ENCODE measurements at regions of chr1 and their contacts with region 1.

Region 1: DNA sequence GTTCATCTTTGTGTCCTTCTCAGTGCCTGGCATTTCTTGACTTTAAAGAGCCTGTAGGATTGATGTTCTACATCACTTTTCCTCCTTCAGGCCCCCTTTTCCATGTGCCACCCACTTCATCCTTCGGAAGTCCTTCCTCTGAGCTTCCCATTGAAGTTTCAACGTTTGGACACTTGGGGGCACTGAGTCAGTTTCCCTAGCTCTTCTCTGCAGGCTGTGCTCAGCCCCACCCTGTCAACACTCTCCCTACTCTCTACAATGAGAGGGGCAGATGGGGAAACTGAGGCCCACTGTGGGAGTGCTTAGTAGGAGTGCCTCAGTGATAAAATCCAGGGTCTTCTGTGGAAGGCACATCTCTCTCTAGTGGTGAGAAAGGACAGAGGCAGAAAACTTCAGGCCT is 11.9 kb downstream of the KCNJ10 start:
- H3K4me3 ChIP-seq: no peak overlapping the region
- H3K27ac ChIP-seq: no peak overlapping the region
- H3K4me1 ChIP-seq: no peaks in the 10 kb centered on the region
- CTCF ChIP-seq: 0 out of 2 replicates have a peak, but pooled peaks have one; percentile 14

Region 2: GRCh38 chr1:160046494-160047110 is 11.5 kb before region 1 on chr1:
- CTCF ChIA-PET with region 1: interaction called, 70 read pairs
- POLR2A ChIA-PET with region 1: no interaction called
- H3K4me3 ChIP-seq: no peak overlapping the region
- H3K27ac ChIP-seq: no peak overlapping the region
- H3K4me1 ChIP-seq: no peaks in the 10 kb centered on the region
- CTCF ChIP-seq: peak; percentile 59

Region 3: GRCh38 chr1:160069460-160070231 is 11.6 kb after region 1 on chr1 and contains the start of gene KCNJ10:
- CTCF ChIA-PET with region 1: interaction called, 541 read pairs
- POLR2A ChIA-PET with region 1: no interaction called
- H3K4me3 ChIP-seq: peak within 1 kb of the TSS; percentile 56
- H3K27ac ChIP-seq: no peak within 1 kb of the TSS
- H3K4me1 ChIP-seq: no peaks in the 10 kb centered on the region; the same call in 1 of the 2 replicates
- CTCF ChIP-seq: no peak

Region 4: DNA sequence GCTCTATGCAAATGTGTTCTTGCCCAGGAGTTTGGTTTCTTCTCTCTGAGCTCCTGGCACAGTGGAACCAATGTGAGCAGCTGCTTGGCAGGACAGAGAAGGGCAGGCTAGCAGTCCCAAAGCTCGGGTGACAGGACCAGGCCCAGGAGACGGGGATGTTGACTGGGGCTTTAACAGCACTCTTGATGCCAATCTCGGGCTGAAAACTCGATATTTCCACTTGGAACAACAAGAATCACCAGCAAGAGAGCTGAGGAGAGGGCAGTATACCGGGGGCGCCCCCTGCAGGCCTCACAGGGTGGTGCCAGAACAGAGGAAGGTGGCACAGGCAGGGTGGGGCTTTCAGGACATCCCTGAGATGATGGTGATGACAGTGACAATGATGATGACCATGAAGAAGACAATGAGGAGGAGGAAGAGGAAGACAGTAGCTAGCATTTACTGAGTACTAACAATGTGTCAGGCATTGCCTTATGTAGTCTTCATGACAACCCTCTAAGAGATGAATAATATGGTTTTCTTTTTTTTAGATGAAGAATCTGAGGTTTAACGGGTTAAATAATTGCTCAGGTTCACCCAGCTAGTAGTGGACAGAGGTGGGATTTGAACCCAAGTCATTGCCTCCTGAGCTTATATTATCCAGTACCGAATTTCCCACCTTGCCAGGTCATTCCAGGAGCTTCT is 20.6 kb after region 1 on chr1:
- CTCF ChIA-PET with region 1: interaction called, 541 read pairs
- POLR2A ChIA-PET with region 1: no interaction called
- H3K4me3 ChIP-seq: no peak overlapping the region
- H3K27ac ChIP-seq: no peak overlapping the region
- H3K4me1 ChIP-seq: no peaks in the 10 kb centered on the region
- CTCF ChIP-seq: peak; percentile 76